ENCODE measurements at regions of chr1 and their contacts with region 1.

Region 1: GRCh38 chr1:244272471-244273261 is 179.0 kb downstream of the ADSS2 start:
- DNase-seq: peak; percentile 70 to 77
- H3K4me3 ChIP-seq: no peak overlapping the region
- H3K27ac ChIP-seq: peak overlapping the region; percentile 14; the same call in 1 of the 2 replicates
- H3K4me1 ChIP-seq: peaks cover 25% of the 10 kb centered on the region
- H3K27me3 ChIP-seq: no peaks in the 10 kb centered on the region
- CTCF ChIP-seq: peak; percentile 98

Region 2: GRCh38 chr1:243708210-243708609 is 564.5 kb before region 1 on chr1:
- CTCF ChIA-PET with region 1: no interaction called
- POLR2A ChIA-PET with region 1: no interaction called
- intact Hi-C with region 1: loop called (anchors 1 kb)
- DNase-seq: no peak
- H3K4me3 ChIP-seq: no peak overlapping the region
- H3K27ac ChIP-seq: no peak overlapping the region
- H3K4me1 ChIP-seq: no peaks in the 10 kb centered on the region
- H3K27me3 ChIP-seq: no peaks in the 10 kb centered on the region
- CTCF ChIP-seq: peak; percentile 55; the same call in 1 of the 2 replicates

Region 3: DNA sequence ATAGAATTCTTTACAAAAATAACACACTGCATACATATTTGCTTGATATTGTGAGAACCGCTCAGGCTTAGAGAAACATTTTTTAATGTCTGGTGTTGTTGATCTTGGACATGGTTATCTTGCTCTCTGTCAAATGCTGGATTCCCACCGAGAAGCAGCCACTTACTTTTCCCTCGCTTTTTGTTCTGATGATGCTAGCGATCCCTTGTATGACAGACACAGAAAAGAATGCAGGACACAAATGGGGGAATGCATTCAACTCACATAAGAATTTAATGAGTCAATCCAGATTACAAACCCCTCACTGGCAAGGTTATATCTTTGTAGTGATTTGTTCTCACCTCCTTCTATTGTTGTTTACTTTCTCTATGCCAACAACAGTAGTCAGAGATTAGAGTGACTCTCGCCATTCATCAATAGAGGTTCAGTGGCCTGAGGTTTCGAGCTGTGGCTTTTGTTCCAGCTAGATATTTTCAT is 345.8 kb before region 1 on chr1:
- CTCF ChIA-PET with region 1: no interaction called
- POLR2A ChIA-PET with region 1: no interaction called
- intact Hi-C with region 1: loop called (anchors 1 kb)
- DNase-seq: peak; percentile 56 to 100
- H3K4me3 ChIP-seq: no peak overlapping the region
- H3K27ac ChIP-seq: peak overlapping the region; percentile 97
- H3K4me1 ChIP-seq: peaks cover 67% of the 10 kb centered on the region
- H3K27me3 ChIP-seq: no peaks in the 10 kb centered on the region
- CTCF ChIP-seq: no peak

Region 4: GRCh38 chr1:244047621-244048471 is 224.8 kb before region 1 on chr1:
- CTCF ChIA-PET with region 1: interaction called, 8 read pairs
- POLR2A ChIA-PET with region 1: interaction called, 3 read pairs
- intact Hi-C with region 1: loop called (anchors 1 kb)
- DNase-seq: peak; percentile 97
- H3K4me3 ChIP-seq: peak overlapping the region; percentile 69
- H3K27ac ChIP-seq: peak overlapping the region; percentile 82
- H3K4me1 ChIP-seq: peaks cover 42% of the 10 kb centered on the region
- H3K27me3 ChIP-seq: no peaks in the 10 kb centered on the region
- CTCF ChIP-seq: 0 out of 2 replicates have a peak, but pooled peaks have one; percentile 14

Region 5: DNA sequence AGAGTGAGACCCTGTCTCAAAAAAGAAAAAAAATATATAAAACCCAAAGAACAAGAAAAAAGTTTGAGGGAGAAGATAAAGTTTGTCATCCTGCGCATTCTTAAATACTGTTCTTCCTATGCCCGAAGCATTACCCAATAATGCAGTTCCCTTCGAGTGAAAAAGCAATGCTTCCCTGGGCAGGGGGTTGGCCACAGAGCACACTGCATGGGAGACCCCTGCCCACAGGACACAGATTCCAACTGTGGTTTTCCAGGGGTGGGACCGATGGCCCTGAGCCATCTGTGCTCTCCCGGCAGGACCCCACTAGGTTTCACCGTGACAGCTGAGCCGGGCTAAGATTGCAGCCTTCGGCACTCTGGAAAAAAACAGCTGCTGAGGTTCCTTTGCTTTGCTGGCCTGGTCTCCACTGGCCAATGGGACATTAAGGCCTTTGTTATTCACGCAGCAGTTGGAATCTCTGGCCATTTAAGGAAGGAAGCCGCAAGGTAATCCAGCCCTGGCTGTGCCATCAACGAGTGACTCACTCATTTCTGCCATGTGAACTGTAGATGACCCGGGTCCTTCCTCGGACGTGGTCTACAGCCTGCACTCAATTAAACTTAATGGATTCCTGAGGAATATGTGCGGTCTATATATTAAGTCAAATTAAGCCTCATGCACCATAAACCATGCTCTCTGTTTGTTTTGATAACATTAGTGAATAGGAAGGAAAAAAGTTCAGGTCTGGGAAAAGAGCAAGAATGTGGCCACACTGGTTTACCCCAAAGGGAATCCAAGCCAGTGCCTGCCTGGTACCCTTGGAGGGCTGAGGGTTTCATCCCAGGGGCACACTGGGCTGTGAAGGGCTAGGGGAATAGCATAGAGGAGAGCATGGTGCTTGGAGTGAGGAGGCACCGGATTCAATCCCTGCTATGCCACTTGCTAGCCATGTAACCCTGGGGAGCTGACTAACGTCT is 58.4 kb before region 1 on chr1:
- CTCF ChIA-PET with region 1: no interaction called
- POLR2A ChIA-PET with region 1: no interaction called
- intact Hi-C with region 1: loop called (anchors 1 kb)
- DNase-seq: peak; percentile 81 to 99
- H3K4me3 ChIP-seq: peak overlapping the region; percentile 31; the same call in 1 of the 2 replicates
- H3K27ac ChIP-seq: peak overlapping the region; percentile 93
- H3K4me1 ChIP-seq: peaks cover 30% of the 10 kb centered on the region
- H3K27me3 ChIP-seq: no peaks in the 10 kb centered on the region
- CTCF ChIP-seq: no peak

Region 6: GRCh38 chr1:244451951-244452795 is 179.5 kb after region 1 on chr1:
- CTCF ChIA-PET with region 1: no interaction called
- POLR2A ChIA-PET with region 1: interaction called, 10 read pairs
- intact Hi-C with region 1: loop called (anchors 1 kb)
- DNase-seq: peak; percentile 96 to 99
- H3K4me3 ChIP-seq: peak overlapping the region; percentile 85
- H3K27ac ChIP-seq: 0 out of 2 replicates have a peak overlapping the region, but pooled peaks have one; percentile 16
- H3K4me1 ChIP-seq: peaks cover 48% of the 10 kb centered on the region
- H3K27me3 ChIP-seq: no peaks in the 10 kb centered on the region
- CTCF ChIP-seq: peak; percentile 47; the same call in 1 of the 2 replicates

Region 7: DNA sequence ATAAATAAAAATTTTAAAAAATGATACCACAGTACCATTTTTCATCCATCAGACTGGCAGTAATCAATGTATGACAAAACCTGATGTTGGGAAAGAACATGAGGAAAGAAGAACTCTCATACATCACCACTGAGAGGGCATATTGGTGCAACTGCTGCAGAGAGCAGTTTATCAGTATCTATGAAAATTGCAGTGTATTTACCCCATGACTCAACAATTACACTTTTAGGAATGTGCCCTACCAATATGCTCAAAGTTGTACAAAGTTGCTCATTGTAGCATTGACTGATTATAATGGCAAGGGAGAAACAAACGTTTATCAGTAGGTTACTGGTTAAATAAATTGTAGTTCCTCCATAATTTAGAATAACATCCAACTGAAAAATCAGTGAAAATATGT is 225.1 kb after region 1 on chr1:
- CTCF ChIA-PET with region 1: no interaction called
- POLR2A ChIA-PET with region 1: no interaction called
- intact Hi-C with region 1: no loop called
- DNase-seq: no peak
- H3K4me3 ChIP-seq: no peak overlapping the region
- H3K27ac ChIP-seq: no peak overlapping the region
- H3K4me1 ChIP-seq: peaks cover 9% of the 10 kb centered on the region; the same call in 1 of the 2 replicates
- H3K27me3 ChIP-seq: no peaks in the 10 kb centered on the region
- CTCF ChIP-seq: no peak